HEK293 (cell line): ENCODE measurements at regions of chr15 and their contacts with region 1.

Region 1: GRCh38 chr15:98518823-98519561 is 129.3 kb upstream of the IGF1R start:
- H3K4me3 ChIP-seq: no peak overlapping the region
- H3K27ac ChIP-seq: no peak overlapping the region
- H3K4me1 ChIP-seq: no peaks in the 10 kb centered on the region; the same call in 1 of the 2 replicates
- CTCF ChIP-seq: peak; percentile 83

Region 2: DNA sequence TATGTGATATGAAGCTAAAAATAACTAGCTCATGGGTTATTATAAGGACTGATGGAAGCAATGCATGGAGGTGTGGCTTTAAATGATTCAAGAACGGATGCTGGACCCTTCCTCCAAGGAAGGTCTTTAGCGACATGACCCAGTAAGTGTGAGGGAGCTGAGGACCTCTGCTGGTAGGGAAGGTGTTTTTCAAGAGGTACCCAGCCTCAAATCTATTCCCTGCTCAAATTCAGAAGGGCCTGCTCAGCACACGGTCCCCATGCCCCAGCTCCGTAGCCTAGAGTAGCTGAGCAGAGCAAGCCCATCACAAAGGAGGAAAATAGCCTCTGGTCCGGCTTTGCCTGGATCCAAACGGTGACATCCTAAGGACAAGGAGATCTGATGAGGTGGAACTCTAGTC is 136.9 kb before region 1 on chr15:
- CTCF ChIA-PET with region 1: no interaction called
- POLR2A ChIA-PET with region 1: no interaction called
- H3K4me3 ChIP-seq: no peak overlapping the region
- H3K27ac ChIP-seq: no peak overlapping the region
- H3K4me1 ChIP-seq: no peaks in the 10 kb centered on the region
- CTCF ChIP-seq: no peak

Region 3: DNA sequence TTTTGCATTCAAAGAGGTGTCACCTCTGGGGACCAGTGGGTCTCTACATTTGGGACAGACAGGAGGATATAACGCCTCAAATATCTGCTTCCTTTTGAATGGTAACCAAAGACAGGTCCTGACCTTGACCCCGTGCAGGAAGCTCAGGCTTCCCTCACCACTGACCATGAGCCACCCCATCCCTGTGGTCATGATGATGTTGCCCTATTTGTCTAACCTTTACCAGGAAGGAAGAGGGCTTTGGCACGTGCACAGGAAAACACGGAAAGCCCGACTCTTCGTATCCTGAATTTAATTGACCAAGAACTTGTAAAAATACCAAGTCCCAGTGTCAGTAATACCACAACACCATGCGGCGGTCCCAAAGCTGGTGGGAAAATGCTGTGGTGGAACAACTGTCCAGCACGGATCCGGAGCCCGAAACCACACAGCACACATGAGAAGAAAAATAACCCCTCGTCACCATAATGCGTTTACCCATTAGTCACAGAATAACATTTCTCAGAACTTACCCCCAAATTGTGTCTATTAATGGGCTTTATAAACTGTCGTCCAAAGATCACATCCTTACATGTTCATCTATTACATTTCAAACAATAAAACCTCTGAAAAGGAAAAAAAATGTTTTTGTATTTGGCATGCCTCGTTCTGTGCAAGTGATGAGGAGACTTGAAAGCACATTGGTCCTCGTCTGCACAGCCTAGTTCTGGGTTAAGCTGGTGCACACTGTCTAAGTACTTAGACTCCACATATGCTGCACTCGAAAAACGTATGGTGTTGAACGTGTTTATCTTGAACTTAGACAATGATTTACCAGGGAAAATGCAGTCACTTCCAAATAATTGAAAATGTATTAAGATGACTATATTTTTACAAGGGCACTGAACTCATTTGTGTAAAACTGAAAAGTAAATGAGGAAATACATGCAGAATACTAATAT is 10.5 kb after region 1 on chr15:
- CTCF ChIA-PET with region 1: interaction called, 17 read pairs
- POLR2A ChIA-PET with region 1: no interaction called
- H3K4me3 ChIP-seq: no peak overlapping the region
- H3K27ac ChIP-seq: no peak overlapping the region
- H3K4me1 ChIP-seq: no peaks in the 10 kb centered on the region
- CTCF ChIP-seq: no peak

Region 4: DNA sequence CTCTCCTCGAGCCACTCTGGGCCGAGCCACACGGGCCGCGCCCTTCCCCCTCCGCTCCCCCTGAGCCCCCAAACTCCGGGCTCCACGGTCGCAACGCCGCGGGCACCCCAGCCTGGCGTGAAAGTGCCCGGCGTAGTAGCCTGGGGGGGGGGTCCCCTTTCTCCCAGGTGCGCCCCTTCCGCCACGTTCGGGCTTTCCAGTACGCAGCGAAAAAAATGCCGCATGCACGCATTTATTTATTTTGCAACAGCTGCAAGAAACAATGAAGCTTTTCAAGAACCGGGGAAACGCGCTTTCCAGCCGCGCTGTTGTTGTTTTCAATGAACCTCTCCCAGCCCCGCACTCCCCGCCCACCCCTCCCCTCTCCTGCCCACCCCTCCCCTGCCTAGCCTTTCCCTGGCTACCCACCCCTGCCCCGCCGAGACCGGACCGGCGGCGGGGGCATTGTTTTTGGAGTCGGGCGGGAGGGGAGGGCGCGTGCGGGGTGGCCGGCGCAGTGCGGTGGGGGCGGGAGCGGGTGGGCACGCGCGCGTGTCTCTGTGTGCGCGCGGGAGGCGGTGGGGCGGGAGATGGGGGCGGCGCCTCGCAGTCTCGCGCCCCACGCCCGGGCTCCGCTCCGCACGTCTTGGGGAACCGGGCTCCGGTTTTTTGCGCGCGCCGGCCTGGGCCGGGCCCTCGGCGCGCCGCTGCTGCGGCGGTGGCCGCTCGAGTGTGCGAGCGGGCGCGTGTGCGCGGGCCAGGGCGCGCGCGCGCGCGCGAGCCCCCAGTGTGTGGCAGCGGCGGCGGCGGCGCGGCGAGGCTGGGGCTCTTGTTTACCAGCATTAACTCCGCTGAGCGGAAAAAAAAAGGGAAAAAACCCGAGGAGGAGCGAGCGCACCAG is 129.0 kb after region 1 on chr15 and contains the start of gene IGF1R:
- CTCF ChIA-PET with region 1: interaction called, 89 read pairs
- POLR2A ChIA-PET with region 1: interaction called, 16 read pairs
- H3K4me3 ChIP-seq: peak within 1 kb of the TSS; percentile 91
- H3K27ac ChIP-seq: peak within 1 kb of the TSS; percentile 96
- H3K4me1 ChIP-seq: peaks cover 14% of the 10 kb centered on the region
- CTCF ChIP-seq: no peak

Region 5: DNA sequence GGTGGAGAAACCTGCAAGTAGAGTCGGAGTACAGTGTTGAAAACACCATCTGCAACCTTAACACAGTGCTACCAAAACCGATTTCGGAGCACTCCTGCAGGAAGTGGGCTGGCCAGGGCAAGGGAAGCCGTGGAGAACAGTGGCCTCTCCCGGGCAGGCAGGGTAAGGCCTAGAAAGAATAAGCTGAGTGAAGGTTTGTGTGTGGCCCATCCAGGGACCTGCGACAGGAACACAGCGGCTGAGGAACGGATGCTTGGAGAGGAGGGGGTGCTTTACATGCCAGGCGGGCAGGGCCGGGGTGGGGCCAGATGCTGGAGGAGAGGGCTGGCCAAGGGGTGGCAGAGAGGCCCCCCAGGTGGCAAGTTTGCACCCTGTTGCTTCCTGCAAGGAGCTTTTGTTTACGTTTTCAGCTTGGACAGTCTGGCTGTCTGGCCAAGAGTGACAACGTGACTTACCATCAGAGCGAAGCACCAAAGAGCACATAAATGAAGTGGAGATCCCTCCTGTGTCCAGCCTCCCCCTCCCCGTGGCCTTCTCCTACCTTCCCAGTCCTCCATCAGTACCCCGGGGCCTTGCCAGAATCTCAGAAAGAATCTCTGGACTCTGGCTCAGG is 332.1 kb after region 1 on chr15:
- CTCF ChIA-PET with region 1: interaction called, 23 read pairs
- POLR2A ChIA-PET with region 1: no interaction called
- H3K4me3 ChIP-seq: no peak overlapping the region
- H3K27ac ChIP-seq: peak overlapping the region; percentile 0; the same call in 1 of the 2 replicates
- H3K4me1 ChIP-seq: peaks cover 37% of the 10 kb centered on the region
- CTCF ChIP-seq: peak; percentile 89

Region 6: GRCh38 chr15:98904544-98904943 is 385.6 kb after region 1 on chr15:
- CTCF ChIA-PET with region 1: interaction called, 10 read pairs
- POLR2A ChIA-PET with region 1: no interaction called
- H3K4me3 ChIP-seq: no peak overlapping the region
- H3K27ac ChIP-seq: no peak overlapping the region
- H3K4me1 ChIP-seq: no peaks in the 10 kb centered on the region
- CTCF ChIP-seq: peak; percentile 63; the same call in 1 of the 2 replicates